ENCODE measurements at regions of chrX and their contacts with region 1.

Region 1: DNA sequence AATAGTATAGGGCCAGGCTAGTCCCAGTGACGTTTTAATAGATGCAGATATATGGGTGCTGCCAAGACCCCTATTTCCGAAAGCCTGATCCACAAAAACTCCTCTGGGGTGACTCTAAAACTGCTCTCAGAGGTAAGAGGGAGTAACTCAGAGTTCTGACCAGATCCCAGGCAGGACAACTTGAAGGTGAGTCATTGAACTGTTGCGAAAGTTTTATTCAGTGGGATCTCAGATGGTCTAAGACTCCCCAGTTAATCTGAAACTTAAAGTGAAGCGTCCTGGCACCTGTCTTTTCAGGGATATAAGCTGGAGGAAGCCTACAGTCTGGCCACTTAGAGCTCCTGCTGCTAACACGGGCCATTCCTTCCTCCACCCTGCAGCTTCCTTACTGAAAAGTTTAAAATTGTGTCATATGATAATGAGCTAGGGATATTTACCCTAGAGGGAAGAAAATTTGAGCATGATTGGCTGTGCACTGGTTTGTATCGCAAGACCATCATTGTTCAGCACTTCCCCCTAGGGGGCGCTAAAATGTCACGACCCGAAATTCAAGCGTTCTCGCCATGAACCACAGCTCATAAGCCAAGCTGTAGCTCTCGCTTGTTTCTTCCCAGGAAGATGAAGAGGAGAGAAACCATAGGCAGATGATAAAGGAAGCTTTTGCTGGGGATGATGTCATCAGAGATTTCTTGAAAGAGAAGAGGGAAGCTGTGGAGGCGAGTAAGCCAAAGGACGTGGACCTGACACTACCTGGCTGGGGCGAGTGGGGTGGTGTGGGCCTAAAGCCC is 19.5 kb downstream of the UTP14A start:
- DNase-seq: peak; percentile 57 to 72
- ATAC-seq: peak; percentile 84

Region 2: DNA sequence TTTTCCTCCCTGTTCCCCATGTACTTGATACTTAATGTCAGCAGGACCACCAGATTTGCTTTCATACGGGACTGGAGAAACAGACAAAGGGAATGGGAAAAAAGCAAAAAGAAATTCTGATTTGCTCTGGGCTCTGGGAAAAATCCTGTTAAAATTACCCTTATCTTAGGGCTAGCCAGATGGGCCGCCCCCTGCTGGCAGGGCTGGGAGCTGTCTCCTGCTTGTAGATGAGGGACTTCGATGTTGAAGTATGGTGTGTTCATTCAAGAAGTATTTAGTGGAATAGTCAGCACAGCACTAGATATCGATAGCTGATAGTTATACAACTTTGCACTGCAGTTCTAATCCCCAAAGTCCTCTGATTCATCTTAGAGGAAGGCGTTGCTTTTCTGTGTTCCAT is 102.7 kb after region 1 on chrX:
- intact Hi-C with region 1: loop called in 1 of 2 experiments (anchors 2 kb)
- DNase-seq: peak in 1 of 2 donors; percentile 71
- ATAC-seq: peak; percentile 52

Region 3: GRCh38 chrX:130055103-130055502 is 129.6 kb after region 1 on chrX:
- intact Hi-C with region 1: loop called in 1 of 2 experiments (anchors 10 kb)
- DNase-seq: no peak
- ATAC-seq: no peak

Measured in left colon (tissue), 2 donors.